K562 (cell line): ENCODE measurements at regions of chr12 and their contacts with region 1.

Region 1: DNA sequence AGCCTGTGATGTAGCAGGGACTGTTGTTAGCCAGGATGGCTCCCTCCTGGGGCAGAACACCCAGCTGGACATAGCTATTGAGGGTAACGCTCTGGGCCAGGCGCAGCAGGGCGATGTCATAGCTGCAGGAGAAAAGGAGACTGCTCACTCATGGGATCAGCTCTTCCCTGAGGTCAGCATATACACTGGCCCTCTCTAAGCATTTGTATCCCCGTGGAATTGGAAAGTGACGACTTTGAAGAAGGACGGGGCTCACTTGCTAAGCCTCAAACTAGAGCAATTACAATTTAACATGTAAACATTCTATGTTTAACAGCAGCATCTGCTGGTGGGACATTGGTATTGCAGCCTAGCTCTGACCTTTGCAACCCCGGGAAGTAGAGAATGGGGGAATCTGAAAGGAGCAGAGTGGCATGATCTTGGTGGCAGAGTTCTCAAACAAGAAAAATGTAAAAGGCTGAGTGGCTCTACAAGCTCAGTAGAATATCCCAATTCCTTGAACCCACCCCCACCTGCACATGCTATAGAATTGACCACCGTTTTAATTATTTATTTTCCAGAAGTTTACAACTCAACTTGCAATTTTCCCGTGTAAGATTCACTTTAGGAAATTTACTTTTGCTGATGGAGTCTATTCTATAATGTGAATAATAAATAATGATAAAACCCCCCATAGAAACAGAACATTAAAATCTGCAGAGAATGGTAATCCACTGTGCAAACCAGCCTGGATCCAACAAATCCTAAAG is 5.0 kb downstream of the CELA1 start:
- DNase-seq: peak; percentile 71 to 82 (median 72)
- ATAC-seq: peak; percentile 85
- H3K4me3 ChIP-seq: no peak overlapping the region
- H3K27ac ChIP-seq: peak overlapping the region; percentile 45; the same call in 2 of the 3 replicates
- H3K4me1 ChIP-seq: peaks cover 11 to 16% of the 10 kb centered on the region in 2 experiments; a peak in 4 of 5 replicates
- H3K27me3 ChIP-seq: no peaks in the 10 kb centered on the region
- CTCF ChIP-seq: peak; percentile 83 to 99 (median 98)
- EP300 ChIP-seq: no peak
- POLR2A ChIP-seq: no peak
- RAD21 ChIP-seq: peak; percentile 98

Region 2: DNA sequence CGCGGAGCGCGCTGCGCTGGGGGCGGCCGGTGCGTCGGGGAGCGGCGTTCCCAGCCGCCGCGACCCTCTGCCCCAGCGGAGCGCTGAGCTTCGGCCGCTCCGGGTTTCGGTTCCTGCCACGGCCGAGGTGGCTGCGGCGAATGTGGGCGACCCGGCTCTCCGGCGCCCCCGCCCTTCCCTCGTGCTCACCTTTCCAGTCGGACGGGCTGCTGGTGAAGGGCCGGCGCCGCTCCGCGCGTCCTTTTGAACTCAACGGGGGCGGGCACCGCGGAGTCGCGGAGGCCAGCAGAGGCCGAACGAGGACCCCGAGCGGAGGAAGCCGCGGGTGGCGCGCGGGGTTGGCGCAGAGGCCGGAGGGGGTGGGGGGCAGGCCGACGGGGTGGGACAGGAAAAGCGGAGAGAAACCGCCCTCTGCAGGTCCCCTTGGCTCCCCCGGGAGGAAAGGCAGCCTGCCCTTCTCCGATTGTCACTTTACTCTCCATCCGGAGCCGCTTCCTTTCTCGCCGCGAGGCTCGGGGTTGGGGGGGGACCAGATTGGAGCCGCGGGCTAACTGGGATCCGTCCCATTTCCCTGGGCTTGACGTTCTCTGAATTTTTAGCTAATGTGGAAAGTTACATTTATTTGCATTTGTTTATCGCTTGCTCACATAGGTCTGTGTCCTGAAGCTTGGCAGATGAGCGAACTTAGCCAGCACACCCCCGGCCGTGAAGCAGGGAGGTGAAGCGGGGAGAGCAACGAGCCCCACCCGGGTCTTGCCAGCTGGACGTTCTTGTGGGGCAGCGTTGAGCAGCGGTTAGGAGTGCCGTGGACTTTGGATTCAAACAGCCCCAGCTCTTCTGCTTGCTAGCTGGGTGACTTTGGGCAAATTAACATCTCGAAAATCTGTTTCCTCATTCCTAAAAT is 71.1 kb before region 1 on chr12 and contains the start of gene SMAGP:
- CTCF ChIA-PET with region 1: interaction called, 34 read pairs
- POLR2A ChIA-PET with region 1: interaction called, 4 read pairs
- in situ Hi-C with region 1: loop called (anchors 5 kb)
- intact Hi-C with region 1: loop called (anchors 1 kb)
- DNase-seq: peak; percentile 72 to 83 (median 78)
- ATAC-seq: peak; percentile 77
- H3K4me3 ChIP-seq: peak within 1 kb of the TSS; percentile 80
- H3K27ac ChIP-seq: peak within 1 kb of the TSS; percentile 74
- H3K4me1 ChIP-seq: peaks cover 17 to 18% of the 10 kb centered on the region in 2 experiments; a peak in 4 of 5 replicates
- H3K27me3 ChIP-seq: no peaks in the 10 kb centered on the region
- CTCF ChIP-seq: no peak; a peak in 1 of 6 replicates
- EP300 ChIP-seq: no peak
- POLR2A ChIP-seq: peak; percentile 56; the same call in 1 of the 2 replicates
- RAD21 ChIP-seq: no peak; a peak in 1 of 4 replicates
- polyA plus RNA-seq, gene SMAGP: 26.0 to 29.9 TPM

Region 3: DNA sequence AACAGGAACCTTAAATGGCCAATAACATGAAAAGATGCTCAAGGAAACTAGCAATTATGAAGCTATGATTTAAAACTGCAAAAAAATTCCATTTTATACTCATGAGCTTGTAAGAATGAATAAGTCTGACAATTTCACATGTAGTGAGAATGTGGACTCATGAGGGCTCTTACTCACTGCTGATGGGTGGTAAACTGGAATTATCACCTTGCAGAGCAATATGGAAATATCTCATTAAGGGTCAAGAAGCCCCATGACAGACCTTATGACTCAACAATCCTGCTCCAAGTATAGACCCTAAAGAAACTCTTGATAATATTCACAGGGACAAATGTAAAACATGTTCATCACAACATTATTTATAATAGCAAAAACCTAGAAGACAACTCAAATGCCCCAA is 47.7 kb before region 1 on chr12:
- CTCF ChIA-PET with region 1: no interaction called
- POLR2A ChIA-PET with region 1: no interaction called
- in situ Hi-C with region 1: no loop called
- intact Hi-C with region 1: loop called (anchors 5 kb)
- DNase-seq: peak in 1 of 4 experiments; percentile 47
- ATAC-seq: no peak
- H3K4me3 ChIP-seq: no peak overlapping the region
- H3K27ac ChIP-seq: no peak overlapping the region
- H3K4me1 ChIP-seq: no peaks in the 10 kb centered on the region
- H3K27me3 ChIP-seq: no peaks in the 10 kb centered on the region
- CTCF ChIP-seq: no peak
- EP300 ChIP-seq: no peak
- POLR2A ChIP-seq: no peak
- RAD21 ChIP-seq: no peak

Region 4: GRCh38 chr12:51307655-51308593 is 33.5 kb before region 1 on chr12:
- CTCF ChIA-PET with region 1: no interaction called
- POLR2A ChIA-PET with region 1: interaction called, 3 read pairs
- in situ Hi-C with region 1: no loop called
- intact Hi-C with region 1: loop called (anchors 5 kb)
- DNase-seq: peak in 2 of 4 experiments; percentile 15 to 22
- ATAC-seq: peak; percentile 63
- H3K4me3 ChIP-seq: no peak overlapping the region
- H3K27ac ChIP-seq: no peak overlapping the region
- H3K4me1 ChIP-seq: peaks cover 0 to 3% of the 10 kb centered on the region in 2 experiments; a peak in 1 of 5 replicates
- H3K27me3 ChIP-seq: no peaks in the 10 kb centered on the region
- CTCF ChIP-seq: peak in 1 of 3 experiments; percentile 16; a peak in 1 of 6 replicates
- EP300 ChIP-seq: no peak
- POLR2A ChIP-seq: no peak
- RAD21 ChIP-seq: peak in 1 of 2 experiments; percentile 29; a peak in 2 of 4 replicates